Naive thymus-derived CD4-positive, alpha-beta T cell (primary cell): ENCODE measurements at regions of chr18 and their contacts with region 1.

Region 1: GRCh38 chr18:35071819-35072247 is 30.6 kb downstream of the MAPRE2 start:
- DNase-seq: no peak
- ATAC-seq: peak; percentile 31
- H3K4me3 ChIP-seq: no peak overlapping the region
- H3K4me3 Mint-ChIP-seq: no peak overlapping the region
- H3K27ac ChIP-seq: no peak overlapping the region
- H3K27ac Mint-ChIP-seq: peak overlapping the region in 6 of 9 donors; percentile 2 to 83 (median 48)
- H3K4me1 ChIP-seq: peaks cover 0 to 5% of the 10 kb centered on the region in 2 donors
- H3K4me1 Mint-ChIP-seq: peaks cover 21 to 91% (median 69%) of the 10 kb centered on the region in 7 donors
- H3K27me3 ChIP-seq: no peaks in the 10 kb centered on the region
- H3K27me3 Mint-ChIP-seq: no peaks in the 10 kb centered on the region

Region 2: GRCh38 chr18:35005963-35006577 is 65.8 kb before region 1 on chr18:
- CTCF ChIA-PET with region 1: interaction called, 3 read pairs
- POLR2A ChIA-PET with region 1: no interaction called
- intact Hi-C with region 1: loop called in 1 of 2 experiments (anchors 5 kb)
- DNase-seq: peak in 7 of 9 donors; percentile 29 to 66 (median 54)
- ATAC-seq: peak; percentile 80
- H3K4me3 ChIP-seq: no peak overlapping the region
- H3K4me3 Mint-ChIP-seq: no peak overlapping the region
- H3K27ac ChIP-seq: no peak overlapping the region
- H3K27ac Mint-ChIP-seq: no peak overlapping the region
- H3K4me1 ChIP-seq: no peaks in the 10 kb centered on the region
- H3K4me1 Mint-ChIP-seq: no peaks in the 10 kb centered on the region
- H3K27me3 ChIP-seq: no peaks in the 10 kb centered on the region
- H3K27me3 Mint-ChIP-seq: no peaks in the 10 kb centered on the region

Region 3: GRCh38 chr18:35050028-35050546 is 21.7 kb before region 1 on chr18:
- CTCF ChIA-PET with region 1: no interaction called
- POLR2A ChIA-PET with region 1: no interaction called
- intact Hi-C with region 1: loop called in 1 of 2 experiments (anchors 2 kb)
- DNase-seq: no peak
- ATAC-seq: peak; percentile 32
- H3K4me3 ChIP-seq: no peak overlapping the region
- H3K4me3 Mint-ChIP-seq: peak overlapping the region; percentile 5 to 86 (median 75)
- H3K27ac ChIP-seq: peak overlapping the region; percentile 40
- H3K27ac Mint-ChIP-seq: peak overlapping the region; percentile 30 to 94 (median 86)
- H3K4me1 ChIP-seq: peaks cover 11 to 46% of the 10 kb centered on the region in 2 donors
- H3K4me1 Mint-ChIP-seq: peaks cover 48 to 90% (median 86%) of the 10 kb centered on the region in 7 donors
- H3K27me3 ChIP-seq: no peaks in the 10 kb centered on the region
- H3K27me3 Mint-ChIP-seq: no peaks in the 10 kb centered on the region

Region 4: DNA sequence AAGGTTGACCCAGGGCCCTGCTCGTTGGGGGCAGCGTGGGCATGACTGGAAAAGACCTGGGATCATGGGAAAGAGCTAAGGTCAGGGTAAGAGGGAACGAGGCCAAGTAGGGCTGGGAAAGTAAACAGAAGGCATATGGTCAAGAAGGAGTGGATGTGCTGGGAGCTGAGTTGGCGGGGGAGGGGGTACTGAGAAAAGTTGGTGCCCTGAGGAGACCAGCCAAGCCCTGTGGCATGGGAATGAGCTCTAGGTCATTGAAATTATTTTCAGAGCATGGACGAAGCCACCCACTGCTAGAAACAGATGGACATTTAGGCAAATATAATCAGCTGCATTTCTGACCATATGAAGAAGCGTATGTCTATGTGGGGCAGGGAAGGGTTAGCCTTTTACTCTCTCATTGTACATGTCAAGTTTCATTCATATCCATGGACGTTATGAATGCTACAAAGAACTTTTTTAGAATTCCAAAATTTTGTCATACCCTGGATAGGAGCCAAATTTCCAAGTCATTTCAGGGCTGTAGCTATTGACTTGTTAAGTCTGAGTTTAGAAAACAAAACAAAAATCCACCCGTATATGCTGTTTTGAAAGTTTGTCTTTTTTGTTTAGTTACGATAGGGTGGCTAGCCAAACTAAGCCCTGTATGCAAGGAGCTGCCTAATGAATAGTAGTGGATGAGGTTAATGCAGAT is 11.6 kb before region 1 on chr18:
- CTCF ChIA-PET with region 1: no interaction called
- POLR2A ChIA-PET with region 1: no interaction called
- intact Hi-C with region 1: loop called in 1 of 2 experiments (anchors 2 kb)
- DNase-seq: no peak
- ATAC-seq: no peak
- H3K4me3 ChIP-seq: no peak overlapping the region
- H3K4me3 Mint-ChIP-seq: peak overlapping the region in 2 of 10 donors; percentile 21 to 27
- H3K27ac ChIP-seq: no peak overlapping the region
- H3K27ac Mint-ChIP-seq: peak overlapping the region in 5 of 9 donors; percentile 5 to 83 (median 41)
- H3K4me1 ChIP-seq: no peaks in the 10 kb centered on the region
- H3K4me1 Mint-ChIP-seq: peaks cover 0 to 95% (median 86%) of the 10 kb centered on the region in 7 donors
- H3K27me3 ChIP-seq: no peaks in the 10 kb centered on the region
- H3K27me3 Mint-ChIP-seq: no peaks in the 10 kb centered on the region

Region 5: DNA sequence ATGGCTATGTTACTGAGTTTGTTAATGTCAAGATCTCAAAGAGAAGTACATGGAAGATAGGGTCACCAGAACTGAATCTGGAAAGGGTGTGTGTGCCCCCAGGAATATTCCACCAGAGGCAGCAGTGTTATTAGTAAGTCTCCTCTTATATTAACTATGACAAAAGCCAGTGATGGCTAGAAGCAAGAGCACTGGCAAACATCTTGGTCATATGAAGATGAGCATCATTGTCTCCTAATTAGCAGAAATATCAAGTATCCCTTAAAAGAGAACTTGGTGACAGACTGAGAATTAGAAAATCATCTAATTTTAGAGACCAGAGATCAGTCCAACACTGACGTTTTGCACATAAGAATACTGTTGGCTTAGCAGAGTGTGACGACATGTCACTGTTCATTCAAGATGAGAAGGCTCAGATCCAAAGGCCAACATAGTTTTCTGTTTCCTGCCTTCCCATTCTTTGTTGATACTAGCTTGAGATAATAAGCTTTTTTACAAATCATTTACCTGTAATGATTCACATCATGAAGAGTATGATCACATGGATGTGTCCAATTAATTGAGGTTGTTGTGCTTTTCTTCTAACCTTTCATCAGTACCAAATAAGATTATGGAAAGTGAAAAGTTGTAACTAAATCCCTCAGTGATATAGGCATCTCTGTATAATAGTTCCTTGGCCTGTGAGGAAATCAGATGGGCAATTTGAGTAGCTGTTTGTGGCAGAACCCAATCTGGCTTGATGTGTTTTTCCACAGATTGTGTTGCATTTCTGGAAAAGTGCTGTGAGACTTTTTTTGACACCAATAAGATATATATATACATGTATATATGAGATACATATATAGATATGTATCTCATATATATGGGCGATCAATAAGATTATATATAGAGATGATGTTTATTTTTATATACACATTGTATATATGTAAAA is 13.9 kb after region 1 on chr18:
- CTCF ChIA-PET with region 1: no interaction called
- POLR2A ChIA-PET with region 1: no interaction called
- intact Hi-C with region 1: loop called in 1 of 2 experiments (anchors 2 kb)
- DNase-seq: no peak
- ATAC-seq: no peak
- H3K4me3 ChIP-seq: no peak overlapping the region
- H3K4me3 Mint-ChIP-seq: no peak overlapping the region
- H3K27ac ChIP-seq: no peak overlapping the region
- H3K27ac Mint-ChIP-seq: peak overlapping the region in 1 of 9 donors; percentile 19
- H3K4me1 ChIP-seq: no peaks in the 10 kb centered on the region
- H3K4me1 Mint-ChIP-seq: peaks cover 2 to 74% (median 62%) of the 10 kb centered on the region in 7 donors
- H3K27me3 ChIP-seq: no peaks in the 10 kb centered on the region
- H3K27me3 Mint-ChIP-seq: no peaks in the 10 kb centered on the region